Mammary epithelial cell (primary cell): ENCODE measurements at regions of chr6 and their contacts with region 1.

Region 1: DNA sequence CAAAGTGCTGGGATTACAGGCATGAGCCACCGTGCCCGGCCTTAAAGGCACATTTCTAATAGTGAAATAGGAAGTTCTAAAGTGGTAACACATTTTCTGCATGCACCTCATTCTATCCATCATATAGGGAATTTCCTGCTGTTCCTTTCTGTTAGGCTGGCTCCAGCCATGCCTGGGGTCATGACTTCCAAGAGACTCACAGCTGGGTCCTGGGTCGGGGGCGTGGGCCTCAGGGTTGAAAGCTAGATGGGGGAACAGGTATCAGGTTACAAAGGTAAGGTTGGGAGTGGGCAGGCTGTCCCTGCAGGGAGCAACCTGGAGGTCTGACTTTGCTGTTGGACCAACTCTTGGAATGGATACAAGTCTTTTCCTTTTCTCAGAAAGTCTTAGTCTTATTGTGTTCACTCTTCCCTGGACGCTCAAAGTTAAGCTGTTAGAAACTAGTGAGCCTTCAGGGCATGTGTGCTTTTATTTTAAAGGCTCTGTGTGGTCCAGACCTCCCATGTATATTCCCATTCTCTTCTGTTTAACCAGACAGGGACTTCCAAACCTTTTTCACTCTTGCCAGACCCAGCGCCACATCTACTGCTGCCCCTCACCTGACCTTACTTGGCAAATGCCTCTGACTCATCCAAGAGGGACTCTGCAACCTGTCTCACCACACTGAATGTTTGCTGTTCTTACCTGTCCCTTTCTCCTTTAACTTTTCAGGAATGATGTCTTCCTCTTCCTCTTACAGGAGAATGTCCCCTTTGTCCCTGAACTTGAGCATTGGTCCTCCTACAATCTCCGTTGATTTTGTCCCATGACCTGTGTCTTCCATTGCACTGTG is 64.4 kb downstream of the TMEM170B start:
- DNase-seq: no peak
- H3K4me3 ChIP-seq: no peak overlapping the region
- H3K27ac ChIP-seq: no peak overlapping the region
- H3K4me1 ChIP-seq: no peaks in the 10 kb centered on the region
- H3K27me3 ChIP-seq: peaks cover 5% of the 10 kb centered on the region
- CTCF ChIP-seq: no peak

Region 2: DNA sequence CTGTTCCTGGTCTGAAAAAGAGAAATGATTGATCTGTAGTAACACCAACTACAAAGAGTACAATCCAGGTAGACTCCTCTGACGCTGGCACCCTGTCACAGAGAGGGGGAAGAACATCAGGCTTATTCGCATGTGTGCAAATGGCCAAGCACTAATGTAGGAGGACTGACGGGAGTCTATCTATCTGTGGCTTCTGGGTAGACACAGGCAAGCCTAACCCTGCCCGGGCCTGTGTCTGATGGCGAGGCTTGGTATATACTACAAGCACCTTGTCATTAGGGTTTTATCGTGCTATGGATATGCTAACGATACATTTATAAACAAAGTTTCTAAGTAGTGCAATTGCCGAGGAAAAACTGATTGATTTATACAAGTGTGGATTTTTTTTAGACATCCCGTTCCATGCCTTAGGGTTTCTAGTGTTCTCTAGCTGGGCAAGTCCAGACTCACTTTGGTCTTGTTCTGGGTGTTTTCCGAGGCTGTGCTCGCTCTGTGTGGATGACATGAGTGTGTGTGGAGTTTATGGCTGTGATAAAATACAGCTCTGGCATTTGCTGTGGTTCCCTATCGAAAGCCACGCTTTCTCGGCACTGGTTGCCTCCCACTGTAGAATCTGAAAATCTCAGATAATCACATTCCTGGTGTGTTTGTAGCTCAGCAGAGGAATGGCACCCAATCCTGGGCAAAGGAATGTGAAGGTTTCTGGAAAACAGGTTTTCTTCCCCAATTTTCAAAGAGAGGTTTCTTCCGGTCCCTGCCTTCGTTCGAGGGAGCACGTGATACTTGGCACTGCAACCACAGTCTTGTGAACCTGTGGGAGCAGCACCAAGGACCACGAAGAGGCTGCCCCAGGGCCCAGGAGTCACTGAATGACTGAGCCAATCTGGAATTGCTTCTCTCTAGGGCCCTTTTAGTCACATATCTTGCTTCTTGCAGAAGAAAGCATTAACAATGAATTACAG is 620.7 kb after region 1 on chr6:
- CTCF ChIA-PET with region 1: no interaction called
- dilution Hi-C with region 1: no loop called
- in situ Hi-C with region 1: no loop called
- intact Hi-C with region 1: loop called (anchors 5 kb)
- DNase-seq: peak; percentile 67
- H3K4me3 ChIP-seq: no peak overlapping the region
- H3K27ac ChIP-seq: peak overlapping the region; percentile 33
- H3K4me1 ChIP-seq: peaks cover 13% of the 10 kb centered on the region
- H3K27me3 ChIP-seq: no peaks in the 10 kb centered on the region
- CTCF ChIP-seq: no peak